ENCODE measurements at regions of chr2 and their contacts with region 1.

Region 1: GRCh38 chr2:217785544-217786045 is 217.2 kb downstream of the TNS1 start:
- DNase-seq: peak; percentile 90
- H3K4me3 ChIP-seq: no peak overlapping the region; a peak in 1 of 4 replicates
- H3K27ac ChIP-seq: no peak overlapping the region
- H3K4me1 ChIP-seq: peaks cover 0 to 9% of the 10 kb centered on the region in 2 experiments; a peak in 2 of 4 replicates
- H3K27me3 ChIP-seq: no peaks in the 10 kb centered on the region
- CTCF ChIP-seq: peak; percentile 94
- EP300 ChIP-seq: no peak
- RAD21 ChIP-seq: peak; percentile 98

Region 2: DNA sequence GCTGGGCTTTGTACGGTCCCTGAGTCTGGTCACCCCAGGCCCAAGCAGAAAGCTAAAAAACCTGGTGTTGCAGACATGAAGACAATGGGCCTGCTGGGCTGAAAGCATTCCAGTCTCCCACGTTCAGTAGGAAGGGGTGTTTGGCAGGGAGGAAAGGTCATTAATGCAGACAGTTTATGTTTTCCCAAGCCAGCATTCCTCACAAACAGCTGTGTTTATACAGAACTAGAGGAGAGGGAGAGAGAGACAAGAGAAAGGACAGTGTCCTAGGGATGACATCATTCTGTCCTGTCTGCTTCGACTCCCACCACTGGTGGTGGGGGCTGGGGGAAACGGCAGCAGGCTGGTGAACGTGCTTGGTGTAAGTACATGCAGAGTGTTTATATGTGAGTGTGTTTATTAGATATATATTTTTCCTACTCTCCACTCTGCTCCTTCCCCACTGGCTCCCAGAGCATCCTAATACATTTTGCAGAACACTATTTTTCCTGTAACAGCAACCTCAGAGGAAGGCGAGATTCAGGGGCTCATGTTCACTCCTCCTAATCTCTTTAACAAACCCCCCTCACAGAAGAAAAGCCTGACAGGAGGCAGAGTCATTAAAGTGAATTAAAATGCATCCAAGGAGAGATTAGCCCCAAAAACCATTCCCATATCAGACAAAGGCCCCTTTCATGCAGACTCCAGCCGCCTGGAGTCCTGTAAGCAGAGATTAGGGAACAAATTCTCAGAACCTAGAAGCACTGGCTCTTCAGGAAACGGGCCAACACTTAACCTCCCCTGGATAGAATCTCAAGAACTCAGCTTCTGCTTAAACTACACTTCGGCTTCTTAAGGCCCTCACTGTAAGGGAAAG is 163.2 kb before region 1 on chr2:
- CTCF ChIA-PET with region 1: no interaction called
- POLR2A ChIA-PET with region 1: no interaction called
- DNase-seq: peak; percentile 47
- H3K4me3 ChIP-seq: no peak overlapping the region
- H3K27ac ChIP-seq: peak overlapping the region in 1 of 2 experiments; percentile 81; a peak in 2 of 4 replicates
- H3K4me1 ChIP-seq: peaks cover 0 to 24% of the 10 kb centered on the region in 2 experiments; a peak in 2 of 4 replicates
- H3K27me3 ChIP-seq: no peaks in the 10 kb centered on the region
- CTCF ChIP-seq: no peak
- EP300 ChIP-seq: no peak
- RAD21 ChIP-seq: no peak

Region 3: DNA sequence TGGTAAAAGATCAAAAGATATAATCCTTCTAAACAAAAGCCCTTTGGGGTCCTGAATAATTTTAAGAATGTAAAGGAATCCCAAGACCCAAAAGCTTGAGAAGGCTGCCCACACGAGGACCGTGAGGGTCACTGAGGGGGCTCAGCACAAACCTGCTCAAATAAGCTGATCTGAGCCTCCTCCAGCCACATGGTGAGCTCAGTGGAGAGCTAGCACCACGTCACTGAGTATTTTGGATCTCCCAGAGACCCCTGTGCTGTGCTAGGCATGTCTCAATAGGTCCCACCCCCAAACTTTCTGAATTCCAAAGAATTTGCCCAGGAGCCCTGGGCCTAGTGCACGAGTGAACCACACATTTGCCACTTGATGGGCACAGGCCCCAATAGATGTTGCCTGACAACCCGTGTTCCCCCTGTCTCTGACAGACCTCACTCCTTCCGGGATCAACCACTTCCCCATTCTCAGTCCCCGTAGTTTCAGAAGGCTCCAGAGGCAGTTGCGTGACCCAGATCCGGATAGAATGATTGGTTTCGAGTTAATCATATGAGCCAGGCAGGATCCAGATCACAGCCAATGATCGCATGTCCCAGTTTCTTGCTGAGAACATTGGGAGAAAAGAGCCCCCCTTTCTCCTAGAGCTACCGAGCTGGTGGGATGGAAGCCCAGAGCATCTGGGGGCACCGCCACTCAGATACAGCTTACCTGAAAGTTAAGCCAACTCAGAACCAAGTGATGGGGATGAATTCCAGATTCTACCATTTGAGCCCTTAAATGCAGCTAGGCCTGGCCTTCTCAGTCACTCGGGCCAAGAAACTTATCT is 13.4 kb after region 1 on chr2:
- CTCF ChIA-PET with region 1: interaction called, 171 read pairs
- POLR2A ChIA-PET with region 1: no interaction called
- DNase-seq: no peak
- H3K4me3 ChIP-seq: no peak overlapping the region
- H3K27ac ChIP-seq: no peak overlapping the region
- H3K4me1 ChIP-seq: peaks cover 0 to 18% of the 10 kb centered on the region in 2 experiments; a peak in 1 of 4 replicates
- H3K27me3 ChIP-seq: no peaks in the 10 kb centered on the region
- CTCF ChIP-seq: no peak
- EP300 ChIP-seq: no peak
- RAD21 ChIP-seq: no peak

Region 4: GRCh38 chr2:217864963-217865772 is 79.6 kb after region 1 on chr2:
- CTCF ChIA-PET with region 1: interaction called, 11 read pairs
- POLR2A ChIA-PET with region 1: no interaction called
- DNase-seq: no peak
- H3K4me3 ChIP-seq: no peak overlapping the region
- H3K27ac ChIP-seq: no peak overlapping the region; a peak in 1 of 4 replicates
- H3K4me1 ChIP-seq: peaks cover 8 to 9% of the 10 kb centered on the region in 2 experiments; a peak in 2 of 4 replicates
- H3K27me3 ChIP-seq: no peaks in the 10 kb centered on the region
- CTCF ChIP-seq: no peak
- EP300 ChIP-seq: no peak
- RAD21 ChIP-seq: no peak

Region 5: DNA sequence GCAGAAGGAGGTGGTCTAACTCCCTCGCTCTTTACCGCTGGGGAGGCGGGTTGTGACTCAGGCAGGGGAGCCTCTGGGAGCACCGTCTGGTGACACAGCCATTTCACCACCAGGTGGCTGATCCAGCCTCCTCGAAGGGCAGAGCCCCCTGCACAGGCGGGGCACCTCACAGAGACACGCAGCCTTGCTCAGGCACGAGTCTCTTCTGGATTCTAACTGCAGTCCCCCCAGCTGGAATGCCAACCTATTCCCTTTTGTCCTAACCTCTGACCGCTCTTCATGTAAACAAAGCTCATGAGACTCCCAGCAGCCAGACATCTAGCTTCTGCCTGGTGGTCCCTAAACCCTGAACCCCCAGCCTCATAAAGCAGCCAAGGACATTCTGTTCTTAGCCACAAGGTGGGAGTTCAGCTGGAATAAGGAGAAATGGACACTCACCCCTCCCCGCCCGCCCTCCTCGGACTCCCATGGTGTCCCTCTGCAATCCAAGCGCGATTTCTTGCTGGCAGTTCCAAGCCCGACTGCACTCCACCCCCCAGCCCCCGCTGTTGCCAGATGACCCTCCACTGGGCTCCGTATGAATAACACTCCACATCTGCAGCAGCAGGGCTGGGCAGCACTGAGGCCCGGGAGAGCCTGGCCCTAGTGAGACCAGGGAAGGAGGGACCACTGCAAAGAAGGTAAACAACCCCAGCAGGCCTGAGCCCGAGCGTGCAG is 132.9 kb after region 1 on chr2:
- CTCF ChIA-PET with region 1: interaction called, 35 read pairs
- POLR2A ChIA-PET with region 1: no interaction called
- DNase-seq: peak; percentile 72
- H3K4me3 ChIP-seq: no peak overlapping the region
- H3K27ac ChIP-seq: no peak overlapping the region; a peak in 1 of 4 replicates
- H3K4me1 ChIP-seq: peaks cover 46 to 63% of the 10 kb centered on the region in 2 experiments
- H3K27me3 ChIP-seq: no peaks in the 10 kb centered on the region
- CTCF ChIP-seq: peak; percentile 31
- EP300 ChIP-seq: no peak
- RAD21 ChIP-seq: no peak; the same call in 1 of the 2 replicates

Region 6: DNA sequence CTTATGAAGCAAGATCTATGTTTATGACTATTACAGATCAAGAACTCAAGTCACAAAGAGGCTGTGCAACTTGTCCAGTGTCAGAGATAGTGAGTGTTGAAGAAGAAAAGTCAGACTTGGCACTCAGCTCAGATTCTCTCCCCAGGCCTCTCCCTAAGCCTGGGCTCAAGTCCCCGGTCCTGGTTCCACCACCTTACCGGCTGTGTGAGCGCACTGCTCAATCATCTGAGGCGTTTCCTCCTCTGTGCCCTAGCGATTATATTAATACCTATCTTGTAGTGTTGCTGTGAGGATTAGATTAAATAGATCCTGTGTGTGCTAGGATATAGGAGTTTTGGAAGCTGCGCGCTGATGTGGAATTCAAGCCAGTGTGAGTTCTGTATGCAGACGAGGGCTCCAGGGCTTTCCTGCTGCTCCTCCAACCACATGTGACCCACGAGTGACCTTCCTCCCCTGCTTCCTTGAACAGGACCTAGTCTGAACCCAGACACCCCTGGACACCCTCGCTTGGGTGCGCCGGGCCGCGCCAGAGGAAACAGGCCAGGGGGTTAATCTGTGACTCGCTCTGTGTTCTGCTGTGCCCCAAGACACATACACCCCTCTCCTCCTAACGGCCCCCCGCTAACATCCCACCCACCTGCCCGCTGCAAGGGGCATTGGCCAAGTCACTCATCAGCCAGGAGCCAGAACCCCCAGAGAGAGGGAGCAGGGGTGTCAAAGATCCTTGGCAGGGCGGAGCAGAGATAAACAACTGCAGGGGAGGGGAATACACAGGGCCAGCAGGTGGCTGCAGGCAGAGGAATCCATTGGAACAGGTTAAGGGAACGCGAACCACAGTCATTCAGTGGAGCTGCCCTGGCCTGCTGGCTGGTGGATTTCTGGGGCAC is 178.9 kb after region 1 on chr2:
- CTCF ChIA-PET with region 1: interaction called, 12 read pairs
- POLR2A ChIA-PET with region 1: no interaction called
- DNase-seq: peak; percentile 51
- H3K4me3 ChIP-seq: no peak overlapping the region
- H3K27ac ChIP-seq: peak overlapping the region in 1 of 2 experiments; percentile 11; a peak in 1 of 4 replicates
- H3K4me1 ChIP-seq: peaks cover 12 to 36% of the 10 kb centered on the region in 2 experiments; a peak in 2 of 4 replicates
- H3K27me3 ChIP-seq: no peaks in the 10 kb centered on the region
- CTCF ChIP-seq: no peak
- EP300 ChIP-seq: no peak
- RAD21 ChIP-seq: no peak

Region 7: GRCh38 chr2:218026676-218027425 is 241.3 kb after region 1 on chr2:
- CTCF ChIA-PET with region 1: interaction called, 161 read pairs
- POLR2A ChIA-PET with region 1: no interaction called
- DNase-seq: peak; percentile 8
- H3K4me3 ChIP-seq: no peak overlapping the region
- H3K27ac ChIP-seq: no peak overlapping the region
- H3K4me1 ChIP-seq: peaks cover 0 to 18% of the 10 kb centered on the region in 2 experiments; a peak in 1 of 4 replicates
- H3K27me3 ChIP-seq: no peaks in the 10 kb centered on the region
- CTCF ChIP-seq: no peak
- EP300 ChIP-seq: no peak
- RAD21 ChIP-seq: no peak

Region 8: DNA sequence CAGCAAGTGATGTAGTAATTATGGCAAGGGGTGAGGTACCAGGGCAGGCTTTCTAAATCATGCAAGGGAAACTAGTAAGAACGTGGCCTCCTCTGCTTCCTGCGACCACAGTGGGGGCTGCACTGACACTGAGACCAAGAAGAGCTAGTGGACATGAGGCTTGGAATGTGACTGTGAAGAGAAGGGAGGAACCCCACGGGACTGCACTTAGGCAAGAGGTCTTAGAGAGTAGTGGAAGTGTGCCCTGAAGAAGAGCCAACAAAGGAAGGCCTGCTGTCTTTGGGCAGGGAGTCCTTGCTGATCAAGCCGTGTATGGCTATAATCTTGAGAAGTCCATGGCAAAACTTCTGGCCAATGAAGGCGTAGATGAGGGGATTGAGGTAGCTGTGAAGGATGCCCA is 274.5 kb after region 1 on chr2:
- CTCF ChIA-PET with region 1: interaction called, 217 read pairs
- POLR2A ChIA-PET with region 1: no interaction called
- DNase-seq: no peak
- H3K4me3 ChIP-seq: no peak overlapping the region
- H3K27ac ChIP-seq: no peak overlapping the region
- H3K4me1 ChIP-seq: peaks cover 0 to 13% of the 10 kb centered on the region in 2 experiments; a peak in 1 of 4 replicates
- H3K27me3 ChIP-seq: peaks cover 27% of the 10 kb centered on the region; the same call in 1 of the 2 replicates
- CTCF ChIP-seq: no peak
- EP300 ChIP-seq: no peak
- RAD21 ChIP-seq: no peak

Measured in SK-N-SH (cell line).